ENCODE measurements at regions of chr6 and their contacts with region 1.

Region 1: DNA sequence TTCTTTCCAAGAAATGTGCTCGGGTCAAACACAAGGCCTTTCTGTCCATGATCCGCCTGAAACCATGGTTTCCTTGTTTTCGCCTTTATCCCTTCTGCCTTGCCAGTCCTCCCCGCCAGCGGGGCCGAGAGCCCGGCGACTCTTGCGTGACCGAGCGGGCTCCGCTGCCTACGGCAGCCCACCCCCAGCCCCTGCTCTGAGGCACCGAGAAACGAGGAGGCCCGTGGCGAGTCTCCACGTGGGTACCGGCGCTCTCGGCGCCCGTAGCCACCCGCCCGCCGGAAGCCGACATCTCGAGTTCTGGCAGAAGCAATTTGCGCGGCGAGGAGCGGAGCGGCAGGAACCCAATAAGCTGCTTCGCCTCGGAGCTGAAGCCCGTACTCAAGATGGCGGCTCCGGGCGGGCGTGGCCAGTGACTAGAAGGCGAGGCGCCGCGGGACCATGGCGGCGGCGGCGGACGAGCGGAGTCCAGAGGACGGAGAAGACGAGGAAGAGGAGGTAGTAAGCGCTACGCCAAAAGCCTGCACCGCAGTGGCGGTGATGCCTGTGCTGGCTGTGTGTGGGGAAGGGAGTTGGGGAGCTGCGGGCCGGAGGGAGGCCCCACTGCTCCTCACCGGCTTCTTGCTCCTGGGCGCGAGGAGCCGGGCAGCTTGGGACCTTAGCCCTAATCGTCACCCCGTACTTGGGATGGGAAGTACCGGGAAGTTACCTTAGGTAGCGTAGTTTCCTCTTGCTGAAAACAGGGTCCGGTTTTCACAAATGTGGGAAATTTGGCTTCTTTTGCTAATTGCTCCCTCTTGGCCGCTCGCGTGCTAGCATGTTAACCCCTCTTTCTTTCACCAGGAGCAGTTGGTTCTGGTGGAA is at the start of gene GTF3C6:
- DNase-seq: peak; percentile 82 to 97
- H3K4me3 ChIP-seq: peak within 1 kb of the TSS; percentile 81 to 90
- H3K27ac ChIP-seq: peak within 1 kb of the TSS; percentile 86 to 96
- H3K4me1 ChIP-seq: peaks cover 0 to 2% of the 10 kb centered on the region in 2 donors
- H3K27me3 ChIP-seq: no peaks in the 10 kb centered on the region
- CTCF ChIP-seq: no peak
- total RNA-seq, gene GTF3C6: 31.9 TPM

Region 2: GRCh38 chr6:110528101-110528929 is 430.2 kb before region 1 on chr6:
- intact Hi-C with region 1: loop called (anchors 5 kb)
- DNase-seq: peak in 1 of 2 donors; percentile 72
- H3K4me3 ChIP-seq: no peak overlapping the region
- H3K27ac ChIP-seq: peak overlapping the region in 1 of 2 donors; percentile 33
- H3K4me1 ChIP-seq: peaks cover 0 to 3% of the 10 kb centered on the region in 2 donors
- H3K27me3 ChIP-seq: no peaks in the 10 kb centered on the region
- CTCF ChIP-seq: peak; percentile 37 to 69 (median 64)

Region 3: GRCh38 chr6:110981202-110981600 is 22.6 kb after region 1 on chr6:
- intact Hi-C with region 1: loop called (anchors 1 kb)
- DNase-seq: no peak
- H3K4me3 ChIP-seq: peak overlapping the region; percentile 70 to 73
- H3K27ac ChIP-seq: peak overlapping the region; percentile 78 to 86
- H3K4me1 ChIP-seq: peaks cover 0 to 5% of the 10 kb centered on the region in 2 donors
- H3K27me3 ChIP-seq: no peaks in the 10 kb centered on the region
- CTCF ChIP-seq: no peak